H1 (cell line): ENCODE measurements at regions of chr17 and their contacts with region 1.

Region 1: DNA sequence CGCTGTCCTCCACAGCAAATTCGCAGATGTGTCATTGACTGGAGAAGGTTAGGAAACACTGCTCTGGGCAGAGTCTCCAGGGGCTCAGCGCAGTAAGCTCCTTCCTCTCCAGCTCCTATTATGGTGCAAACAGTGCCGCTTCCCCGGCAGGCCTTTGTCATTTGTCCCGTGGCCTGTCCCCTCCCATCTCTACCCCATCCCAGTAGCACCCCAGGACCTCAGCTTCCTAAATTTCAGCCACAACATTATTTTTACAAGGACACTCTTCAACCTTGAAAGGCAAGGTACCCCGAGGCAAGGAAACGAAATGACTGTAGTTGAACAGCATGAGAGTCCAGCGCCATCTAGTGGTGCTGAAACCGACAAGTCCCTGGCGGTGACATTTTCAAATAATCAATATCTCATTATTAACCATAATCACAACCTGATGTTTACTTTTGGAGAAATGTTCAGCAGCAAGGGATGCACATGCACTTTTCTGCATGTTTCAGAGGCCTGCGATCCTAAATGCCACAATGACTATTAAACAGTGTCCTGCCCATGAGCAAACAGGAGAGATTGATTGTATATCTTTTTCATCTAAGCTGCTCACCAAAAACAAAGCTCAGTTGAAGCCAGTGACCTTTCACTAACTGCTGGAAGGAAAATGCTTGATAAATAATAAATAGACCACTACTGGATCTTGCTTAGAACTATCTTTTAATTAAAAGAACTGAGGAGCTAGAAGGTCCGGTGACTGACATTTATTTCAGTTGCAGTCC is 16.5 kb downstream of the MRPS23 start:
- DNase-seq: peak; percentile 13 to 74
- H3K4me3 ChIP-seq: peak overlapping the region in 3 of 4 experiments; percentile 31 to 52 (median 42); a peak in 6 of 8 replicates
- H3K27ac ChIP-seq: no peak overlapping the region
- H3K4me1 ChIP-seq: peaks cover 5 to 14% (median 7%) of the 10 kb centered on the region in 4 experiments
- H3K27me3 ChIP-seq: no peaks in the 10 kb centered on the region
- CTCF ChIP-seq: peak; percentile 78 to 96 (median 87)
- EP300 ChIP-seq: no peak
- POLR2A ChIP-seq: no peak
- RAD21 ChIP-seq: peak; percentile 77 to 83

Region 2: DNA sequence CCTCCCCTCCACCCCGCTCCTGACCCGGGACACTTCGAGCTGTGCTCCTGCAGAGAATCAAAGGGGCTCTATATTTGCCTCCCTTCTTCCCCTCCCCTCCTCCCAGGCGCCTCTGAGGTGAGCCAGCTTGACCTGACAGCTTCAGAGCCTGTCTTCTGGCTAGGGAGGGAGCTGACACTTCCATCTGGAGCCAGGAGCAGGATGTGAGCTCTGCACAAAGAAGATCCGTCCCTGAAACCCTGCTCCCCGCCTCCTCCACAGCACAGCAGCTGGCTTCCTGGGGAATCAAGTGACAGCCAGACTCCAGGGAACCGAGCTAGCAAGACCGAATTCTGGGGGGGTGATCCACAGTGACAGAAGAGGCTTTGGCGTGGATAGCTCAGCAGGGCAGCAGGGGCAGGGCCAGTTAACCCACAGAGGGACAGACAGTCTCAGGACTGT is 125.5 kb before region 1 on chr17:
- CTCF ChIA-PET with region 1: no interaction called
- POLR2A ChIA-PET with region 1: no interaction called
- DNase-seq: peak in 1 of 2 experiments; percentile 60
- H3K4me3 ChIP-seq: peak overlapping the region in 2 of 4 experiments; percentile 9 to 36; a peak in 2 of 8 replicates
- H3K27ac ChIP-seq: no peak overlapping the region
- H3K4me1 ChIP-seq: peaks cover 0 to 11% (median 6%) of the 10 kb centered on the region in 4 experiments; a peak in 6 of 7 replicates
- H3K27me3 ChIP-seq: no peaks in the 10 kb centered on the region; a peak in 2 of 7 replicates
- CTCF ChIP-seq: peak in 1 of 3 experiments; percentile 7; a peak in 1 of 4 replicates
- EP300 ChIP-seq: no peak
- POLR2A ChIP-seq: no peak
- RAD21 ChIP-seq: no peak

Region 3: DNA sequence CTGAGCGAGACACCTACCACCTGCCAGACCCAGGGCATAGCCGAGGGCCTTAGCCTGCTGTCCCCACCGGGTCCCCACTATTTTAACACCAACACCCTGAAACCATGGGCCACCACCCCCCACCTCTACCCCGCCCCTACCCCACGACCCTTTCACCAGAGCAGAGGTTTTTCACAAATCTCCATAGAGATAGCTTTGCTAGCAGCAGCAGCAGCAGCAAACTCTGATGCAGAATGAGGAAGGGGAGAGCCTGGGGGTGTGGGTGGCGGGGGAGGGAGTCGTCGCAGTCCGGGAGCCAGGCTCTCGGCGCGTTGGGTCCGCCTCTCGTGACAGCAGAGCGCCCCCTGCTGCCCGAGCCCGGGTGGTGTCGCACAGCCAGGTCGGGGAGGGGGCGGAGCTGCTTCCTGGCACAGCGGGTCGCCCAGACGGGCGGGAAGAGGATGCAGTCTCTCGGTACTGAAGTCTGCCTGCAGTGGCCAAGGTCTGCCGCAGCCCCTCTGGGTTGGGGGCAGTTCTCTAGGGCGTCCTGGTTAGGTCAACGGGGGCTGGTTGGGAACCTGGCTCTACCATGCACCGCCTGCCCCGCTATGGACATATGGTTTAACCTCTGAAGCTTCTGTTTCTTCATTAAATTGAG is 50.1 kb before region 1 on chr17:
- CTCF ChIA-PET with region 1: interaction called, 42 read pairs
- POLR2A ChIA-PET with region 1: interaction called, 3 read pairs
- DNase-seq: peak; percentile 70 to 99
- H3K4me3 ChIP-seq: peak overlapping the region in 1 of 4 experiments; percentile 45; a peak in 2 of 8 replicates
- H3K27ac ChIP-seq: no peak overlapping the region
- H3K4me1 ChIP-seq: peaks cover 5 to 12% (median 8%) of the 10 kb centered on the region in 4 experiments; a peak in 6 of 7 replicates
- H3K27me3 ChIP-seq: peaks cover 0 to 13% (median 7%) of the 10 kb centered on the region in 4 experiments; a peak in 6 of 7 replicates
- CTCF ChIP-seq: peak; percentile 88 to 94 (median 94)
- EP300 ChIP-seq: peak; percentile 33 to 63; a peak in 2 of 3 replicates
- POLR2A ChIP-seq: no peak
- RAD21 ChIP-seq: peak; percentile 81 to 83

Region 4: DNA sequence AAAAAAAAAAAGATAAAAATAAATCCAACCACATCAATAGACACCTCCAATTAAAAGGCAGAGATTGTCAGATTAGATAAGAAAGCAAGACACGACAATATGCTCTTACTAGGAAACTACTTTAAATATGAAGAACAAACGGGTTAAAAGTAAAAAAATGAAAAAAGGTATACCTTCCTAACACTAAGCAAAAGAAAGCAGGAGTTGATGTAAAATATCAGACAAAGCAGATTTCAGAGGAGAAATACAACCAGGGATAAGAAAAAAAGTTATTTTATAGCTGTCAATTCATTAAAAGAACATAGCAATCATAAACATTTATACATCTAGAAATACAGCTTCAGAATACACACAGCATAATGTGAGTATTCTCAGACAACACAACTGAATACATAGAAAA is 38.5 kb before region 1 on chr17:
- CTCF ChIA-PET with region 1: interaction called, 12 read pairs
- POLR2A ChIA-PET with region 1: interaction called, 3 read pairs
- DNase-seq: no peak
- H3K4me3 ChIP-seq: no peak overlapping the region
- H3K27ac ChIP-seq: no peak overlapping the region
- H3K4me1 ChIP-seq: no peaks in the 10 kb centered on the region
- H3K27me3 ChIP-seq: no peaks in the 10 kb centered on the region
- CTCF ChIP-seq: no peak
- EP300 ChIP-seq: no peak
- POLR2A ChIP-seq: no peak
- RAD21 ChIP-seq: no peak

Region 5: GRCh38 chr17:57849874-57850754 is 16.8 kb after region 1 on chr17 and contains the start of gene MRPS23:
- CTCF ChIA-PET with region 1: interaction called, 49 read pairs
- POLR2A ChIA-PET with region 1: interaction called, 6 read pairs
- DNase-seq: peak; percentile 90 to 96
- H3K4me3 ChIP-seq: peak within 1 kb of the TSS; percentile 89 to 98 (median 94)
- H3K27ac ChIP-seq: peak within 1 kb of the TSS; percentile 63
- H3K4me1 ChIP-seq: peaks cover 0 to 7% (median 3%) of the 10 kb centered on the region in 4 experiments; a peak in 3 of 7 replicates
- H3K27me3 ChIP-seq: no peaks in the 10 kb centered on the region
- CTCF ChIP-seq: no peak
- EP300 ChIP-seq: peak in 1 of 2 experiments; percentile 92; a peak in 1 of 3 replicates
- POLR2A ChIP-seq: peak in 1 of 2 experiments; percentile 68; a peak in 2 of 3 replicates
- RAD21 ChIP-seq: no peak
- total RNA-seq, gene MRPS23: 60.4 and 73.4 TPM in 2 replicates